ENCODE measurements at regions of chr4 and their contacts with region 1.

Region 1: DNA sequence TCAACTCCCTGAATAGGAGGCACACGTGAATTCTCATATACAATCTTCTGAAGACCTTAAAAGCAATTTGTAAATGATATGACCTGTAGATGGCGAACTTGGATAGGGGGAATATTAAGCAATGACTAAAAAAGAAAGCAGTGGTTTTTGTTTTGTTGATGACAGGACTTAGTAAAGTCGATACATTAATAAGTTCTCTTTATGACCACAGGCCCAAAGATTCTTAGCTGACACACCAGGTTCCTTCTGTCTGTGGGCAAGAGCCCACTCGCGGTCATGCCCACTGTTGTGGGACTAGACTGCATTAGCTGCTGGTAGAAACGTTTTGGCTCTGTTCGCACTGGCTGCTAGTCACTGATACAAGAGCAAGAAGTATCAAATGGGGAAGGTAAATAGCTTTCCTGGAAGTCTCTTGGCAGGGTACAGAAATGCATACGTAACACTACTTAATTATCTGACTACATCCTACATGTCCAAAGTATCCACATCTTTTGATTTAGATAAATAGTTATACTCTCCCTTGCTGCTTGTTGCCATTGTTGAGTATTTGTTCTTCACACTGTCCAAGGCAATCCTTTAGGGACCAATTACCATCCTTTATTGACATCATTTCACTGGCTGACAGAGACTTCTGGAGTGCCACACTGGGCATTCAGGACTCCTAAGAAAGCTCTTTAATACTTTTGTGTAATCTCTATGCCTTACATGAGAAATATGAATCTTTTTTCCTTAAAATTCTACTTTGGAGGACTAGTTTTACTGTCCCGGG is 31.0 kb downstream of the ALPK1 start:
- DNase-seq: no peak
- ATAC-seq: peak in 3 of 4 donors; percentile 51 to 79 (median 52)
- H3K4me3 ChIP-seq: no peak overlapping the region
- H3K27ac ChIP-seq: no peak overlapping the region
- H3K4me1 ChIP-seq: no peaks in the 10 kb centered on the region
- H3K27me3 ChIP-seq: no peaks in the 10 kb centered on the region
- CTCF ChIP-seq: peak; percentile 56

Region 2: DNA sequence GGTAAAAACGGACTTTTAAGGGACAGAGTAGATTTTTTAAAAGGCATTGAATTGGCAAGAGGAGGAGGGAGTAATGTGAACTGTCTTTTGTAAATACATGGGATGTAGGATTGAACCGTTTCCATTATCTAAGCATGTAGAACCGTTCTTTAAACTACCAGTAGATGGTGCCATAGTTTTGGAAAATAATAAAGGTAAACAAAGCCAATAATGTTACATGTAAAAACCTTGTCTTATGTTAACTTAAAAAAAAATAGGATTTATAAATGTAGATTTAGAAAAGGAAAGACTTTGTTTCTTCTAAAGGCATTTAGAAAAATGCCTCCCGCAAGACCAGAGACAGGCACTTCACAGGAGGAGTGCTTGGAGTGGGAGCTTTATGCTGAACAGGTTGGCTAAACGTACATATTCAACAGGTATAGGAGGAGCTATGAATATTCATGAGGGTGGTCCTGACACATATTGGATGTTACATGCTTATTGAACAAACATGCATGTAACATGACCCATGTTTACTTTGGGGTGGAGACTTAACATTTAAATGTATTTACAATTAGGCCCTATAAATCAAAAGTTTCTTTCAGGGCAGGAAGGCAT is 228.3 kb before region 1 on chr4:
- intact Hi-C with region 1: loop called in 1 of 2 experiments (anchors 10 kb)
- DNase-seq: no peak
- ATAC-seq: peak in 3 of 4 donors; percentile 68 to 88 (median 68)
- H3K4me3 ChIP-seq: no peak overlapping the region
- H3K27ac ChIP-seq: no peak overlapping the region
- H3K4me1 ChIP-seq: no peaks in the 10 kb centered on the region
- H3K27me3 ChIP-seq: no peaks in the 10 kb centered on the region
- CTCF ChIP-seq: peak; percentile 72

Region 3: DNA sequence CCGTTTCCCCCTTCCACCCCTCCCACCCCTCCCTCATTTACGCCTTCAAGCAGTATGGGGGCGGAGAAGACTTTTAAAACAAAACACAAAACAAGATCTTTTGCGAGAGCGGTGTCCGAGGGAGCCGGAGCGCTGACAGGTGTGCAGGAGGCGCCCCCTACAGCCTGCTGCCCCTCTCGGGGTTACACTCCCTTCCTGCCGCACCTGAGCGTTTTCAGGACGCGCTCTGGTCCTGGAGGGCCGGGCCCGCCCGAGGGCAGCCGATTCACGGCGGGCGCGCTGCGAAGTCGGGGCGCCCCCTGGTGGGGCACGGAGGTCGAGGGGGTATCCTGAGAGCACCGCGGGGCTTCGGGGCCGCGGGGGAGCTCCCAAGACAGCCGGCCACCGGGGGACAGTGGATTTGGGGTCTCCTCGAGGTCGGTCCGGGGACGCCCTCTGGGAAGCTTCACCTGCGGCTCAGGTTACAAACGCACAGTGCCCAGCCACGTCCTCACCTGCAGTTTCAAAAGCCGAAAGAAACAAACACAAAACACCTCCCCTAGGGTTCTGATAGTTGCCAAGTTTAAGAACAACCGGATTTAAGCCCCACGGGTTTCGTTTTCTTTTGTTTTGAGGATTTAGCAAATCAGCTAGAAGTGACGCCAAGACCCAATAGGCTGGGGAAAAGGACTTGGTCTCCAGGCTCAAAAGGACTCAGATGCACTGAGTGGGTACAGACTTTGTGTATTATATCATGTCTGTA is 195.8 kb after region 1 on chr4:
- intact Hi-C with region 1: loop called (anchors 1 to 2 kb)
- DNase-seq: peak; percentile 44 to 76
- ATAC-seq: peak; percentile 71 to 95 (median 82)
- H3K4me3 ChIP-seq: peak overlapping the region; percentile 55
- H3K27ac ChIP-seq: no peak overlapping the region
- H3K4me1 ChIP-seq: peaks cover 2% of the 10 kb centered on the region
- H3K27me3 ChIP-seq: peaks cover 0 to 66% (median 36%) of the 10 kb centered on the region in 3 donors
- CTCF ChIP-seq: peak; percentile 71

Region 4: GRCh38 chr4:112604589-112604988 is 276.4 kb after region 1 on chr4:
- intact Hi-C with region 1: loop called (anchors 5 to 10 kb)
- DNase-seq: no peak
- ATAC-seq: peak in 3 of 4 donors; percentile 51 to 64 (median 59)
- H3K4me3 ChIP-seq: no peak overlapping the region
- H3K27ac ChIP-seq: no peak overlapping the region
- H3K4me1 ChIP-seq: no peaks in the 10 kb centered on the region
- H3K27me3 ChIP-seq: no peaks in the 10 kb centered on the region
- CTCF ChIP-seq: peak; percentile 52

Region 5: DNA sequence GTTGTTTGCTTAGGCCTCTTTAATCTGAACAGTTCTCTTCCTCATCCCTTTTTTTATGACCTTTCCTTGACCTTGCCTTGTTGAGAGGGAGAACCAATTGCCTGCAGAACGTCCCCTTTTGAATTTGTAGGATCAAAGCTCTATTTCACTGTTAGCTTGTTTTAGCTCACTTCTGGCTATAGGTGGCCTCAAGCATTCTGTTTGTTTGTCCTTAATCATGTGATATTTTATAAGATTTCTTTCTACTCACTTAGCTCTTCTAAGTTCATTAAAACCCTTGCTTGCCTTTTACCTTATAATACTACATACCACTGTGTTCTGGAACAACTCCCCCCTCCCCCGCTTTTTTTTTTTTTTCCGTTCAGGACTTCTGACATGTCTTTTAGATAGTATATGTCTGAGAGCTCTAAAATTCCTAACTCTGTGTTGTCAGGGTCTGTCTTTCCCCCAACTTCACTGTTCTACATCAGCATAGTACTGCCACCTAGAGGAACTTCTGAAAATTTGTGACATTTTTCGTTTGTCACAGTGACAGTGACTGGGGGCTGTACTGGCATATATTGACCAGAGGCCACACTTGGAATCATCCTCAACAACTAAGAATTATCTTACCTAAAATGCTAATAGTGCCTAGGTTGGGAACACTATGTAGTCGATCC is 437.3 kb after region 1 on chr4:
- intact Hi-C with region 1: loop called in 1 of 2 experiments (anchors 10 kb)
- DNase-seq: no peak
- ATAC-seq: peak; percentile 46 to 84 (median 67)
- H3K4me3 ChIP-seq: no peak overlapping the region
- H3K27ac ChIP-seq: no peak overlapping the region
- H3K4me1 ChIP-seq: peaks cover 4% of the 10 kb centered on the region
- H3K27me3 ChIP-seq: no peaks in the 10 kb centered on the region
- CTCF ChIP-seq: peak; percentile 56

Measured in psoas muscle (tissue), 8 donors.